Activated CD4-positive, alpha-beta memory T cell treated with anti-CD3 and anti-CD28 coated beads, Interleukin-2, amount 10 ng/mL, durations not matched to agents 7 days and 5 days (primary cell): ENCODE measurements at regions of chr6 and their contacts with region 1.

Region 1: DNA sequence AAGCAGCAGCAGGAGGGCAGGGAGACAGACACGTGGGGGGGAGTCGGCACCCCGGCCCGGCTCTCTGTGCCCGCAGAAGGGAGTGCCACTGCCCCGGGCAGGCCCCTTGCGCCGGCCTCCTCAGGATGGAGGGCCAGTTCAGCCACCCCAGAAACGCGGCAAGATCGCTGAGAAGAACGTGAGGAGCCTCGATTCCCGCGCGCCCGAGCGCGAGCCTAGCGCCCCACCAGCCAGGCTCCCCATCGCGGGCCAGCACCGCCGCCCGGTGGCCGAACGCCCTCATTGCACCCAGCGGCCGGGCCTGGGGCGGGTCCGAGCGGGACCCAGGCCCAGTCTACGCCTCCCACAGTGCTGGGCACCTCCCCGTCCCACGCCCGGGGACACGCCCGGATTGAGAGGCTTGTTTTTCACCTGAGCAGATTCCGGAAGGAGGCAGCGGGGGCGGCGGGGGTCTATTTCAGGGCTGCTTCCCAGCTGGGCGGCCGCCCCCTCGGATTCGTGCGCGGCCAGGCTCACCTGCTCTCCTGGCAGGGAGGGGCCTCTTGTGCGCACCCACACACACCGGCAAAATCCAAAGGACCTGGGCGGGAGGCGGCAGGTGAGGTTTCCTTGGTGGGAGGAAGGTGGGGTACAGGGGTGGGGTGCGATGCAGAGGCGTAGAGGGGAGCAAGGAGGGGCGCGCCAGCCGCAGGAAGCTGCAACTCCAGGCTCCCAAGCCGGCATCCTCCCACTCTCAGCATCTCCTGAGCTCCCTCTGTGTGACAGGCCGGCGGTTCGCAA is 9.0 kb upstream of the GRM4 start:
- DNase-seq: peak; percentile 60
- H3K4me3 Mint-ChIP-seq: no peak overlapping the region
- H3K27ac Mint-ChIP-seq: no peak overlapping the region
- H3K4me1 Mint-ChIP-seq: no peaks in the 10 kb centered on the region
- H3K27me3 Mint-ChIP-seq: peaks cover 65% of the 10 kb centered on the region

Region 2: DNA sequence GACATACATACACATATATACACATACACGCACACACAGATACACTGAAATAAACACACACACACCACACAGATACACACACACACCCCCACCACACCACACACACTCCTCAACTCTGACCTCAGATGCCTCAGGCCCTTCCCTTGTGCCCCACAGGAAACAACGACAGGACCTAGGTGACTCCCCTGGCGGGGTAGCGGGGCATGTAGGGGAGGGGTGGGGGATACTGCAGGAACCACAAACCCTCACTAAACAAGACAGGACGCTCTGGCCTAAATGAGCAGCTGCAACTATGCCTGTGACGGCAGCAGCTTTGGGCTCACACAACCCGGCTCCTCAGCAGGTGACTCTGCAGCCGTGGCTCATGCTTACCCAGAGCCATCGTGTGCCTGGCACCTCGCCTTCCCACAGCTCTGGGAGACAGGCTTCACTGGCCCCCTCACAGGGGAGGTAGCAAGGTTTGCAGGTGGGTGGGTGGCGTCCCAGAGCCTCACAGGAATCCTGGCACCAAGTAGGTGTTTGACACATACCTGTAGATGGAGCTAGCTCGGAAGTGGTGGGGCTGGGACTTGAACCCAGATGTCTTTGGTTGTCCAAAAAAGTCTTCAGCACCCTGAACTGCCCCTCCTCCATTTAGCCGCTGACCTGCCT is 109.8 kb before region 1 on chr6:
- CTCF ChIA-PET with region 1: no interaction called
- POLR2A ChIA-PET with region 1: no interaction called
- DNase-seq: peak; percentile 35
- H3K4me3 Mint-ChIP-seq: no peak overlapping the region
- H3K27ac Mint-ChIP-seq: no peak overlapping the region
- H3K4me1 Mint-ChIP-seq: peaks cover 9% of the 10 kb centered on the region
- H3K27me3 Mint-ChIP-seq: peaks cover 13% of the 10 kb centered on the region

Region 3: DNA sequence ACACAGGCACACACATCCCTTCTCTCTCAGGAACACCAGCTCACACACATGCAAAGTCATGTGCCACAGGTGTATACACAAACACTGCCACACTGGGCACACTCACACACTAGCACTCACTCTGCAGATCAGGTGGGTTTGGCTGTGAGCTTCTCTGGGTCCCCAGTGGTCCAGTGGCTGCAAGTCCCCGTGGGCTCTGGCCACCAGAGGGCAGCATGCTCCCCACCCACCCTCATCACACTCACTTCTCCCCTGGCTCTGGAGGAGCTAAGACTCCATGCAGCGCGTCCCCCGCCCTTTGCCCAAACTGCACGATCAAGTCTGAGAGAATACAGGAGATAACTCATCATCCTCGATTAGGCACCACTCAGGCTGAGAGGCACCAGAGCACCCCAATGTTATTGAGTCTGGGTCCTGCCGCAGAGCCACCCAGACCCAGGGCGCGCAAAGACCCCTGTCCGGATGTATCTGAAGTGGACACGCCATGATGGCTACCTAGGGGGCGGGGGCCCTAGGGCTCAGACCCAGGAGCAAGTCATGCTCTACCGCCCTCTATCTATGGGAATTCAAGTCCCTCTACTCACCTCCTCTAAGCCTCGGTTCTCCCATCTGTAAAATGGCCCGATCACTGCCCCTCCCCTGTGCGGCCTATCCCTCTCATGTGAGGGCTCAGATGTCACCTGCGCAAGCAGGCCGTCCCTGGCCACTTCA is 99.5 kb before region 1 on chr6:
- CTCF ChIA-PET with region 1: interaction called, 32 read pairs
- POLR2A ChIA-PET with region 1: no interaction called
- DNase-seq: peak; percentile 58
- H3K4me3 Mint-ChIP-seq: no peak overlapping the region
- H3K27ac Mint-ChIP-seq: no peak overlapping the region
- H3K4me1 Mint-ChIP-seq: no peaks in the 10 kb centered on the region
- H3K27me3 Mint-ChIP-seq: peaks cover 3% of the 10 kb centered on the region

Region 4: GRCh38 chr6:34386316-34387137 is 231.7 kb after region 1 on chr6:
- CTCF ChIA-PET with region 1: no interaction called
- POLR2A ChIA-PET with region 1: no interaction called
- DNase-seq: no peak
- H3K4me3 Mint-ChIP-seq: no peak overlapping the region
- H3K27ac Mint-ChIP-seq: no peak overlapping the region
- H3K4me1 Mint-ChIP-seq: peaks cover 6% of the 10 kb centered on the region
- H3K27me3 Mint-ChIP-seq: no peaks in the 10 kb centered on the region